Tibial artery (tissue), 4 donors: ENCODE measurements at regions of chr3 and their contacts with region 1.

Region 1: DNA sequence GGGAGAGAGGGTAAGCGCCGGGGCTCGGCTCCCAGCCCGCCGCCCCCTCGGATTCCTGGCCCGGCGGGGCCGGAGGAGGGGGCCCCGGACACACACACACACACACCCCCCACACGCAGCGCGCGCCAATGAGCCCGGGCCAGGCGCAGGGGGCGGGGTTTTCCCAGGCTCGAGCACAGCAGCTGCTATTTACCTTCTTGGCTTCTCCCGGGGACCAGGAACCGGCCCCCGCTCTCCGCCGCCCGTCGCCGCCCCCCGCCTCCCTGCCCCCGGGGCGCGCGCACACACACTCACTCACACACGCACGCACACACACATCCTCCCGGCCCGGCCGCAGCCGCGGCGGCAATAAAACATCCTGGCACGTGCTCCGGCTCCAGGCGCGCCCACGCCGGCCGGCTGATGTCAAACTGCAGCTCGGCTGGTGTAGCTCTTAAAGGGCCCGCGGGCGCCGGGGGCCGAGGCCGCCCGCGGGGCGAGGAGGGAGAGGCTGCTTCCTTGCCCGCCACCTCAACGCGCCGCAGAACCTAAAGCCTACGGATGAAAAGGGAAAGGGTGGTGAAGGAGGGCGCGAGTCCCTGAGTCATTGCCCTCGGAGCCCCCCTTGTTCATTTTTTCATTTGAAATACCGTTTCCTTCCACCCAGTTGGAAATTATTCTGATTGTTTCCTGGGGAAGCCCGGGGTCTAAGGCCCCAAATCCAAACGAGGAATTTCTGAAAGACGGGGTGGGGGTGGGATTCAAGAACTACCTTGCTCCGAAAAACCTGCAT is 1.0 kb upstream of the HES1 start:
- DNase-seq: peak; percentile 92 to 98
- H3K4me3 ChIP-seq: peak overlapping the region; percentile 67 to 90
- H3K27ac ChIP-seq: peak overlapping the region; percentile 90 to 99
- H3K4me1 ChIP-seq: peaks cover 0 to 64% (median 50%) of the 10 kb centered on the region in 4 donors
- H3K27me3 ChIP-seq: no peaks in the 10 kb centered on the region
- CTCF ChIP-seq: no peak

Region 2: DNA sequence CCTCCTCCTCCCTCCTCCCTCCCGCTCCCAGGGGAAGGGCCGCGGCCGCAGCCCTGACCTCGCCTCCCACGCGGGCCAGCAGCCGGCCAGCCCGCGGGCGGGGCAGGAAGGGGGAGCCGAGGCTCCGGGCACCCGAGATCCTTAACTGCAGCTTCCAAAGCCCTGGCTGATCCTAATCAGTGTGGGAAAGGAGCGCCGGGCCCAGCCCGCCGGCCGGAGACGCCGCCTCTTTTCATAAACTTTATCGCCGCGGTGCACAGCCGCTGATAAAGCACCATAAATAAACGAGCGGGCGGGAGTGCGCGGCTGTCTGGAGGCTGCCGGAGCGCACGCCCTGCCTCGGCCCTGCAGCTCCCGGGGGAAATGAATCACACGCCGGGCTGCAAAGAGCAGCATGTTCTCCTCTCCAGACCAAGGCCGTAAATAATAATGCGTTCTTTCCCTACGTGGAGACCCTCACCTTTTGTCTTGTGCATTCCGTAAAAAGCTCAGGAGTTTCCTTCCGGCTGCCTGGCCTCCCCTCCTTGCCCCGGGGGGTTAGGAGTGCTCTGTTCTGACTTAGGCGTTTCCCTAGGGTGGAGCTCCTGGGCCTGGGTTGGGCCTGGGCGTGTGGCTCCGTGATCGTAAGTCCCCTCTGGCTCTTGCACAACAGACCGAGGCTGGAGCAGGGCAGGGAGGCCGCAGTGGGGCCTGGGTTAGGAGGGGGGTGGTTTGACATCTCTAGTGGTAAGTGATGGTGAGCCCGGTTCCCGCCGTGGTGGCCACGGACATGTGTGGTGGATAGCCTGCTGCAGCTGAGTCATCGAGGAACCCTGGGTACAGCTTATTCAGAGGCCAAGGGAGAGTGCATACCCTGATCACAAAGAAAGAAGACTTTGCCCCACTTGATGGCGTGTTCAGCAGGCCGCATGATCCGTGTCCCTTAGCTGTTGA is 131.6 kb before region 1 on chr3:
- intact Hi-C with region 1: loop called (anchors 2 kb)
- DNase-seq: peak; percentile 96 to 98
- H3K4me3 ChIP-seq: peak overlapping the region; percentile 36 to 48
- H3K27ac ChIP-seq: peak overlapping the region; percentile 60 to 85
- H3K4me1 ChIP-seq: peaks cover 5 to 28% (median 19%) of the 10 kb centered on the region in 4 donors
- H3K27me3 ChIP-seq: peaks cover 0 to 22% of the 10 kb centered on the region in 2 donors
- CTCF ChIP-seq: no peak

Region 3: GRCh38 chr3:194083637-194084224 is 51.2 kb before region 1 on chr3:
- intact Hi-C with region 1: loop called (anchors 1 kb)
- DNase-seq: no peak
- H3K4me3 ChIP-seq: no peak overlapping the region
- H3K27ac ChIP-seq: no peak overlapping the region
- H3K4me1 ChIP-seq: peaks cover 0 to 24% (median 13%) of the 10 kb centered on the region in 4 donors
- H3K27me3 ChIP-seq: peaks cover 0 to 6% of the 10 kb centered on the region in 2 donors
- CTCF ChIP-seq: no peak

Region 4: DNA sequence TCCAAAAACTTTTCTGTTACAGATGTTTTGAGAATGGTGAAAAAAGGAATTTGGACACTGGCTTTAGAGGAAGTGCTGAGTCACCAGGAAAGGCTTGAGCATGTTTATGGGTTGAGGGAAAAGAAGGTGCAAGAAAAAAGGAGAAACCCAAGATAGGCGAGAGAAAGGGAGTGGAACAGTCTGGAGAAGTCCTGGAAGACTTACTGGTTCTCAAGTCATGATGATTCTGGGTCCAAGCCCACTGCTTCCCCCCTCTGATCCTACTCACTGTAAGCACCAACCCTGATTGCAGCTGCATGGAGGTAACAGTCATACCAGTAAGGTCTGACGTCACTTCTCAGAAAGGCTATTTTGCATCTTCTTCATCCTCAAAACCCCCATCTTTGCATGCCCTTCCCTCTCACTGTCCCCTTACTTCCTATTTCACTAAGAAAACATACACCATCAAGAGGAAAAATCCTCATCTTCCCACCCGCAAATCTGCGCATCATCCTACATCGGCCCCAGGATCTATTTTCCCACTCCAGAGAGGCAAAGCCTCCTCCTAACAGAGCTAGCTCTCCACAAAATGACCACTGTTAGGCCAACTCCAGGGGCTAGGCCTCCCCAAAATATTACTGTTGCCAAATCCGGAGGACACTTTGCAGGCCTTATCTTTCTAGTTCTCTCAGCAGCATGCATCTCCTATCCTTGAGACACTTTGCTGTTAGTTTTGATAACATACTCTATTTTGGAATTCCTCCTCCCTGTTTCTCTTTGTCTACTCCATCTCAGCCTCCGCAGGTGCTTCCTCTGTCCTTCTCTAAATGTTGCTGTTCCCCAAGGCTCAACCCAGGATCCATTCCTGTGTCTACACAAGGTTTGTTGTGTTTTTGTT is 355.0 kb after region 1 on chr3:
- intact Hi-C with region 1: loop called (anchors 5 kb)
- DNase-seq: no peak
- H3K4me3 ChIP-seq: no peak overlapping the region
- H3K27ac ChIP-seq: peak overlapping the region; percentile 95 to 96
- H3K4me1 ChIP-seq: peaks cover 0 to 59% (median 33%) of the 10 kb centered on the region in 4 donors
- H3K27me3 ChIP-seq: no peaks in the 10 kb centered on the region
- CTCF ChIP-seq: no peak